Posterior cingulate gyrus (tissue), 11 donors: ENCODE measurements at regions of chr20 and their contacts with region 1.

Region 1: GRCh38 chr20:35277531-35278395 is at the start of gene MMP24OS:
- DNase-seq: peak; percentile 67 to 98 (median 90)

Region 2: GRCh38 chr20:34834459-34834893 is 443.3 kb before region 1 on chr20:
- intact Hi-C with region 1: loop called (anchors 10 kb)
- DNase-seq: no peak

Region 3: DNA sequence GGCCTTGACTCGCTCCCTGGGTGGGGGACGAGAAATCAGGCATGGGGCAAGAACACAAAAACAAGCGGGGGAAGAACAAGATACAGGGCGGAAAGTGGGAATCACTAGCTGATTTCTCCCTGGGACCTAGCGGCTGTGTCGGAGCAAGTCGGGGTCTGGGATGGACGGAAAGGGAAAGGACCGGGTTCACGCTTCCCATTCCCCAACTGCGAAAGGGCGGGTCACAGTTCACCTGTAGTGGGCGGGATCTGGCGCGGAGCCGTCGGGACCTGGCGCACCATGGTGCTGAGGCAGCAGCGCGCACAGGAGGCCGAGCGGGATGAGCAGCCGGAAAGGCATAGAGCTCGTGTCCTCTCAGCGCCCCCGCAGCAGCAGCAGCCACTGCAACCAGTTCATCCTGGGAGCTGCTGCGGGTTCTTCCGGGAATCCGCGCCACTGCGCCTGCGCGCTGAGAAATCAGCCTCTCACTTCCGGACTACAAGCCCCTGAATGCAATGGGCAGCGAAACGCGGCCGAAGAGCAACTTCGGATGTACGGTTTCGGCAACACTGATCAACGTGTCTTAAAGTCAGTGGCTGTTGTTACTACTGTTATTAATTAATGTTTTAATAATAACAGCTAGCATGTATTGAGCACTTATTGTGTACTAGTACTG is 130.7 kb before region 1 on chr20 and contains the start of gene EDEM2:
- intact Hi-C with region 1: loop called (anchors 5 kb)
- DNase-seq: peak; percentile 92 to 99 (median 96)